PC-3 (cell line): ENCODE measurements at regions of chr17 and their contacts with region 1.

Region 1: GRCh38 chr17:9924735-9925191 is 19.7 kb upstream of the RCVRN start:
- DNase-seq: peak; percentile 83
- ATAC-seq: peak; percentile 75
- H3K4me3 ChIP-seq: no peak overlapping the region
- H3K27ac ChIP-seq: no peak overlapping the region
- H3K4me1 ChIP-seq: no peaks in the 10 kb centered on the region; the same call in 1 of the 2 replicates
- H3K27me3 ChIP-seq: peaks cover under 1% of the 10 kb centered on the region; the same call in 1 of the 2 replicates
- CTCF ChIP-seq: peak; percentile 74

Region 2: GRCh38 chr17:9729034-9729650 is 195.6 kb before region 1 on chr17:
- CTCF ChIA-PET with region 1: no interaction called
- POLR2A ChIA-PET with region 1: no interaction called
- intact Hi-C with region 1: loop called (anchors 1 kb)
- DNase-seq: peak; percentile 65
- ATAC-seq: peak; percentile 35; the same call in 1 of the 2 replicates
- H3K4me3 ChIP-seq: no peak overlapping the region
- H3K27ac ChIP-seq: no peak overlapping the region
- H3K4me1 ChIP-seq: peaks cover 6% of the 10 kb centered on the region
- H3K27me3 ChIP-seq: no peaks in the 10 kb centered on the region
- CTCF ChIP-seq: peak; percentile 85

Region 3: GRCh38 chr17:9959377-9959981 is 34.7 kb after region 1 on chr17:
- CTCF ChIA-PET with region 1: no interaction called
- POLR2A ChIA-PET with region 1: no interaction called
- intact Hi-C with region 1: loop called (anchors 1 kb)
- DNase-seq: peak; percentile 53
- ATAC-seq: peak; percentile 59; the same call in 1 of the 2 replicates
- H3K4me3 ChIP-seq: no peak overlapping the region
- H3K27ac ChIP-seq: no peak overlapping the region
- H3K4me1 ChIP-seq: no peaks in the 10 kb centered on the region
- H3K27me3 ChIP-seq: peaks cover 33% of the 10 kb centered on the region
- CTCF ChIP-seq: peak; percentile 69

Region 4: GRCh38 chr17:10115071-10115539 is 190.3 kb after region 1 on chr17:
- CTCF ChIA-PET with region 1: no interaction called
- POLR2A ChIA-PET with region 1: no interaction called
- intact Hi-C with region 1: no loop called
- DNase-seq: peak; percentile 46
- ATAC-seq: no peak
- H3K4me3 ChIP-seq: no peak overlapping the region
- H3K27ac ChIP-seq: no peak overlapping the region
- H3K4me1 ChIP-seq: peaks cover 8% of the 10 kb centered on the region; the same call in 1 of the 2 replicates
- H3K27me3 ChIP-seq: peaks cover 15% of the 10 kb centered on the region; the same call in 1 of the 2 replicates
- CTCF ChIP-seq: no peak